Stomach (tissue), 19 donors: ENCODE measurements at regions of chr16 and their contacts with region 1.

Region 1: DNA sequence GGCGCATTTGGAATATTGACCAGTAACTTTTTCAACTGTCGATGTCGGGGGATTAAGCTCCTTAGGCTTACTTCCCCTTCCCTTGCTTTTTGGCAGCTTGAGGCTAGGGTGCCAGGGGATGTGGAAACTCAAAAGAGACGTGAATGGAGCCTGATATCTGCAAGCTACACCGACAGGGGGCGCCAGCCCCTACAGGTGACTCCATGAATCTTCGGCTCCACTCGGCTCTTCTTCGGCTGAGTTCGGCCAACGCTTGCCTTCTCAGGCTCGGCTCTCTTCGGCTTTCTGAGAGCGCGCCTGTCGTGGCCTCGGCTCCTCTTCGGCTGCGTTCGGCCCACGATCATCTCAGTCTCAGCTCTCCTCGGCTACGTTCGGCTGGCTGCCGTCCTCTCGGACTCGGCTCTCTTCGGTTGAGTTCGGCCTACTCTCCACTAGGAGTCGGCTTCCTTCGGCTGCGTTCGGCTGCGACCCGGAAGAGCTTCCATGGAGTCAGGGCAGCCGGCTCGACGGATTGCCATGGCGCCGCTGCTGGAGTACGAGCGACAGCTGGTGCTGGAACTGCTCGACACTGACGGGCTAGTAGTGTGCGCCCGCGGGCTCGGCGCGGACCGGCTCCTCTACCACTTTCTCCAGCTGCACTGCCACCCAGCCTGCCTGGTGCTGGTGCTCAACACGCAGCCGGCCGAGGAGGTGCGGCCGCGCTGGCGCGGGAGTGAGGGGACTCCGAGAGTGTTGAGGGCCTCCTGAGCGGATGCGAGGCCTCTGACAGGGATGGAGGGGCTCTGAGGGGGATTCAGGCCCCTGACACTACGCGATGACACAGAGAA is at the start of gene ERCC4:
- DNase-seq: peak; percentile 100
- H3K4me3 ChIP-seq: peak within 1 kb of the TSS; percentile 75 to 91 (median 80)
- H3K27ac ChIP-seq: peak within 1 kb of the TSS; percentile 53 to 88 (median 81)
- H3K4me1 ChIP-seq: peaks cover 8 to 49% (median 34%) of the 10 kb centered on the region in 4 donors
- H3K27me3 ChIP-seq: no peaks in the 10 kb centered on the region
- CTCF ChIP-seq: peak in 6 of 7 experiments; percentile 49 to 97 (median 86)
- EP300 ChIP-seq: no peak
- POLR2A ChIP-seq: no peak
- total RNA-seq, gene ERCC4: 1.4 to 45.8 (median 23.2) TPM

Region 2: DNA sequence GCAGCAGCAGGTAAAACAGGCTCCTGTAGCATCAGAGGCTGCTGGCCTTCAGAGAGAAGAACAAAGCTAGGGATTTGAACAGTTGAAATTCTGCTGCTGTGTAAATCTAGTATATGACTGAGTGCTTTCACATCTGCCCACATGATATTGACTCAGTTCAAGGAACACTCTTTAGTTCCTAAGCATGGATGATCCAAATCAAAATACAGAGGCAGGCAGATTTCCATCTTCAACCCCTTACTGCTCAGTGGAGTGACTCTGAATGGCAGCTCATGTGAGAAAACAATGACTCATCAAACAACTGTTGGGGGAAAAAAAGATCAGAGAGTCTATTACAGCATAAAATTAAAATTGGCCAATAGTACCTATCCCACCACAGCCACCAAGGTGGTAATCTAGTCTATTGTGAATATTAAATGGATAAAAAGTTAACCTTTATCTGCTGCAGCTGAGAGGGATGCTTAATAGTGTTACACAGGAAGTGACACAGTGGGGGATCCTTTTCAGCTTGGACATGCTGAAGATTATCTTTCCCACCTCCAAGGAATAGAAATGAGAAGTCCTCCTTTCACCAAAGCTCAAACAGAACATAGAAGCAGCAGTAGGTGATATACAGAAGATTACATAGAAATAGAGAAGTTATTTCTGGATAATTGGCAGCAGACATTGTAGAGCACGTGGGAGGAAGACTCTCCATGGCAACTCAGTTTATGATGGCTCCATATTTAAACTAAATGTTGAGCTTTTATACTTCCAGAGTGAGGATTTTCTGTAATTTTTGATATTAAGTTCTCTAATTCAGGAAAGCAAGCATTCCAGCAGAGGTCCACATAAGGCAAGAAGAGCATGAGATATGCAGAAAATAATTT is 239.6 kb before region 1 on chr16:
- intact Hi-C with region 1: no loop called
- DNase-seq: no peak
- H3K4me3 ChIP-seq: no peak overlapping the region
- H3K27ac ChIP-seq: no peak overlapping the region
- H3K4me1 ChIP-seq: no peaks in the 10 kb centered on the region
- H3K27me3 ChIP-seq: no peaks in the 10 kb centered on the region
- CTCF ChIP-seq: no peak
- EP300 ChIP-seq: no peak
- POLR2A ChIP-seq: no peak

Region 3: DNA sequence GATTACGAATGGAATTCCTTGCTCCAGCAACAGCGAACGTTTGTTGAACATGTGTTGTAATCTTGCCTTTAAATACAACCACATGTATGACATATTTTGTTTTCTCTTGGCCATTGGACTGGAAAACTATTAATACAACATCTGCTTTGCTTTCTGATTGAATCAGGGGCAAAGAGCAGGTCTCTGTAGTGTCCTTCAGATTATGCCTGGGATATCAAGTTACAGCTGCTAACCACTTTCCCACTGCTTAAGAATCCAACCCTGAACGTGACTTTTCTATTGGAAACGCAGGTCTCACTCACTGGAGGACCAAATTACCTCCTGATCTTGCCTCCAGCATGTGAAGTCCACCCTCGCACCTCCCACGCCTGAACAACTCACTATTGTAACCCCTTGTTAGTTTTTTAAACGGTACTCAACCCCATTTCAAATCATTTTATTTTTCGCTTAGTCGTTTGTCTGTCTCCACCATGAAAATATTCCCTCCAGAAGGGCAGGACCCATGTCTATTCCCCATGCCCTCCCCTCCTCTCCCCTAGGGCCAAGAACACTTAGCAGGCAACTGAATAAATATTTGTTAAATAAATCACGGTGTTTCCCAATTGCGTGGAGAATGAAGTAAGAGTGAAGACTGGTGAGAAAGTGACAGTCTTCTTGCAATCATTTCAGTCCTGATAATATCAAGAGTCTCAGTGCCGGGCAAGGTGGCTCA is 93.8 kb after region 1 on chr16:
- intact Hi-C with region 1: no loop called
- DNase-seq: peak in 1 of 2 donors; percentile 87
- H3K4me3 ChIP-seq: no peak overlapping the region
- H3K27ac ChIP-seq: peak overlapping the region; percentile 43 to 83 (median 65)
- H3K4me1 ChIP-seq: peaks cover 10 to 40% (median 37%) of the 10 kb centered on the region in 4 donors
- H3K27me3 ChIP-seq: no peaks in the 10 kb centered on the region
- CTCF ChIP-seq: no peak
- EP300 ChIP-seq: no peak
- POLR2A ChIP-seq: no peak

Region 4: GRCh38 chr16:14111713-14112540 is 192.0 kb after region 1 on chr16:
- intact Hi-C with region 1: no loop called
- DNase-seq: peak; percentile 55 to 57
- H3K4me3 ChIP-seq: no peak overlapping the region
- H3K27ac ChIP-seq: peak overlapping the region in 3 of 5 donors; percentile 6 to 57 (median 27)
- H3K4me1 ChIP-seq: peaks cover 22 to 71% (median 52%) of the 10 kb centered on the region in 4 donors
- H3K27me3 ChIP-seq: no peaks in the 10 kb centered on the region
- CTCF ChIP-seq: no peak
- EP300 ChIP-seq: no peak
- POLR2A ChIP-seq: no peak

Region 5: DNA sequence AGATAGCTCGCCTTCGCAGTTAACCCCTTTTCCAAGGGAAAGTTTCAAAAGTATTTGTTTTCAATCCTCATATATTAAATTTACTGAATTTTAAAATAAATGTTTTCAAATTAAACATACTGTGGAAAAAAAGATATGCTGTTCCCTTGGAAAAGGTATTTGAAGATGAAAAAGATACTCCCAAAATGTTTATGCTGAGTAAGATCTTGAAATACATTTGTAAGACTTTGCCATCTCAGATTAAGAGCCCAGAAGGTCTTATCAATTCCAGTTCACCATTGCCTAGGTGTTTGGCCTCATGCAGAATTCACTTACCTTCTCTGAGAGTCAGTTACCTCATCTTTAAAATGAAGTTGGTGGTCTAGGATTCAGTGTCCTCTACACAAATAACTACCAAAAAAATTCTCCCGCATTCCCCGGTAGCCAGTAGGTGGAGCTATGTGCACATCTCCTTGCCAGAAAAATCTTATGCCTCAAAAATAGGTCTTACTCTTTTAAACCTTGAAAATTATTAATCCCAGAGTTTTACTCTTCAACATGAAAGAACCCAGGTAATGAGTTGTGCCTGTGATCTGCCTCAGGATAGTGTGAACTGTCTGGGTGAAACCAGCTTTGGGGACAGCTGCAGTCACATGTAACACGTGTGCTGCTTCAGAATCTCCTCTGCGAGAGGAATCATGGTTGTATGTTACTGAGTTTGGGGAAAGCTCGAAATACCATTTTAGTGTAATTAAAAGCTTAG is 329.6 kb after region 1 on chr16:
- intact Hi-C with region 1: loop called (anchors 10 kb)
- DNase-seq: peak; percentile 39 to 73
- H3K4me3 ChIP-seq: no peak overlapping the region
- H3K27ac ChIP-seq: no peak overlapping the region
- H3K4me1 ChIP-seq: no peaks in the 10 kb centered on the region
- H3K27me3 ChIP-seq: no peaks in the 10 kb centered on the region
- CTCF ChIP-seq: peak in 5 of 7 experiments; percentile 45 to 74 (median 63)
- EP300 ChIP-seq: no peak
- POLR2A ChIP-seq: no peak

Region 6: DNA sequence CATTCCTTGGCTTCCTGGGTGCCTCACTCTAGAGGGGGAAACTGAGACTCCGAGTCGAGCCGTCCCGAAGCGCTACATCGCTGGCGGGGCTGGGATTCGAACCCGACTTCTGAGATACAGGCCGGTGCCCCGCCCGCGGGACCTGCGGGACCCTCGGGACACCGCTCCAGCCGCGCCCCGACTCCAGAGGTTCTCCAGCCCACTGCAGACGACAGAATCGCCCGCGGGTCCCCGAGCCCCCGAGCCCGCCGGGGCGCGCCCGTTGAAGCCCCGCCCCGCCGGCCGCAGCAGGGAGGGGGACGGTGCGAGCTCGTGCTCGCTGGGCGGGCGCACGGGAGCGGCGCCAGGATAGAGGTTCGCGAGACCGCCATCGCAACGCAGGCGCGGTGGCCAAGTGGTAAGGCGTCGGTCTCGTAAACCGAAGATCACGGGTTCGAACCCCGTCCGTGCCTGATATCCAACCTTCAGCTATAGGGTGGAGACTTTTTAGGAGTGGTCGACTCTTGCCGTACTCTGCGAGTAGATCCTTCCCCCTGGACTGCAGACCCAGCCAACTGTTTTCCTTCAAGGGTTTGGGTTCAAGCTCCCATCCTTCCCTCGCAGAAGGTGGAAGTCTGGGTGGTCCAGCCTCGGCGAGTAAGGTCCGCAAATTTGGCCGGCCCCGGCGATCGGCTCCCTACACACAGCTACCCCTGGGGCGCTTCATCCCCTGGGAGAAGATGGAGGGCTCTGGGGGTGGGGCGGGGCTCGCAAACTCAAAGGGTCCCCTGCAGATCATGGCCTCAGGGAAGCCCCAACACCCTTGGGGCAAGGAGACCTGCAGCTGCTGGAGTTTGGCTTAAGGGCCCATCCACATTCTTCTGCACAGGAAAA is 365.9 kb after region 1 on chr16:
- intact Hi-C with region 1: loop called (anchors 10 kb)
- DNase-seq: peak; percentile 97 to 98
- H3K4me3 ChIP-seq: peak overlapping the region; percentile 82 to 90 (median 90)
- H3K27ac ChIP-seq: peak overlapping the region; percentile 83 to 93 (median 90)
- H3K4me1 ChIP-seq: peaks cover 0 to 19% (median 14%) of the 10 kb centered on the region in 4 donors
- H3K27me3 ChIP-seq: no peaks in the 10 kb centered on the region
- CTCF ChIP-seq: no peak
- EP300 ChIP-seq: no peak
- POLR2A ChIP-seq: no peak